PC-9 (cell line): ENCODE measurements at regions of chr5 and their contacts with region 1.

Region 1: GRCh38 chr5:90409318-90410177 is at the start of gene CETN3:
- DNase-seq: peak; percentile 90 to 92
- H3K4me3 ChIP-seq: peak within 1 kb of the TSS; percentile 92
- H3K27ac ChIP-seq: peak within 1 kb of the TSS; percentile 82
- H3K4me1 ChIP-seq: peaks cover 29% of the 10 kb centered on the region; the same call in 1 of the 2 replicates
- H3K27me3 ChIP-seq: no peaks in the 10 kb centered on the region
- CTCF ChIP-seq: no peak
- total RNA-seq, gene CETN3: 29.3 and 35.6 TPM in 2 replicates

Region 2: GRCh38 chr5:90461292-90461691 is 51.7 kb after region 1 on chr5:
- CTCF ChIA-PET with region 1: no interaction called
- POLR2A ChIA-PET with region 1: interaction called, 10 read pairs
- intact Hi-C with region 1: no loop called
- DNase-seq: no peak
- H3K4me3 ChIP-seq: no peak overlapping the region
- H3K27ac ChIP-seq: no peak overlapping the region
- H3K4me1 ChIP-seq: no peaks in the 10 kb centered on the region
- H3K27me3 ChIP-seq: no peaks in the 10 kb centered on the region
- CTCF ChIP-seq: no peak